T-cell (primary cell): ENCODE measurements at regions of chr3 and their contacts with region 1.

Region 1: DNA sequence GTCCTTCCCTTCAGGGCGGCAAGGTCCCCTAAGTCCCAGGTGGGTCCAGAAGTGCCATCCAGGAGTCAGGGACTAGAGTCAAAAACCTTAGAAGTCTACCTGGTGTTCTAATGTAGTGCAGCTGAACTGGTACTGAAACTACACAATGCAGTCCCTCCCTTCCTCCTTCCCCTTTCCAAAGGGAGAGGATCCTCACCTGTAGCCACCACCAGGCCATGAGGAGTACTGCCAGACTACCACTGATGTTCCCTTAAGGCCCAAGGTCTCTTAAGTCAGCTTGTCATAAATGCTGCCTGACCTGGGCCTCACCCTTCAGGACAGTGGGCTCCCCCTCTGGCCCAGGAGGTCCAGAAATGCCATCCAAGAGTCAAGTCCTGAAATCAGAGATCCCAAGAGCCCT is 98.9 kb downstream of the ULK4 start:
- DNase-seq: no peak
- ATAC-seq: no peak
- H3K4me3 ChIP-seq: no peak overlapping the region
- H3K4me3 Mint-ChIP-seq: no peak overlapping the region
- H3K27ac ChIP-seq: no peak overlapping the region
- H3K27ac Mint-ChIP-seq: no peak overlapping the region
- H3K4me1 ChIP-seq: no peaks in the 10 kb centered on the region
- H3K4me1 Mint-ChIP-seq: no peaks in the 10 kb centered on the region
- H3K27me3 ChIP-seq: no peaks in the 10 kb centered on the region
- H3K27me3 Mint-ChIP-seq: no peaks in the 10 kb centered on the region

Region 2: DNA sequence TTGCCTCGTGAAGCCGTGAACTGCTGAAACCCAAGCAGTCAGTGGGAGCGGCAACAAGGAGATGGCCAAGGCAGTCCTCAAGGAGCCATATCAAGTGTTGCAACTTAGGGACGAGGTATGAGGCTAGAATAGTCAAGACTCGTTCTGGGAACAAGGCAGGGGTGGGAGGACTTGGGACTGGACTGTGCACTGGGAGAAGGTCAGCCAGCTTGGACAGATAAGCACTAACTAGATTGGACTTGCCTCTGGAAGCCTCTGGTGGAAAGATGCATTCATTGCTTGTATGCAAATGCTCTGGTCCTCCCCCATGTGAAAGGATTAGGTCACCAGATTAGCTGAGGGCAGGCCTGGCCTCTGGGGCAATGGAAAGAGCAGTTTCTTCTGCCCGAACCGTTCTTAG is 787.0 kb before region 1 on chr3:
- CTCF ChIA-PET with region 1: interaction called in 1 of 2 experiments, 11 read pairs
- POLR2A ChIA-PET with region 1: no interaction called
- DNase-seq: no peak
- ATAC-seq: no peak
- H3K4me3 ChIP-seq: no peak overlapping the region
- H3K4me3 Mint-ChIP-seq: no peak overlapping the region
- H3K27ac ChIP-seq: no peak overlapping the region
- H3K27ac Mint-ChIP-seq: no peak overlapping the region
- H3K4me1 ChIP-seq: no peaks in the 10 kb centered on the region
- H3K4me1 Mint-ChIP-seq: no peaks in the 10 kb centered on the region
- H3K27me3 ChIP-seq: peaks cover 0 to 10% of the 10 kb centered on the region in 2 experiments
- H3K27me3 Mint-ChIP-seq: no peaks in the 10 kb centered on the region

Region 3: GRCh38 chr3:41874022-41874421 is 11.0 kb after region 1 on chr3:
- CTCF ChIA-PET with region 1: no interaction called
- POLR2A ChIA-PET with region 1: no interaction called
- DNase-seq: no peak
- ATAC-seq: no peak
- H3K4me3 ChIP-seq: no peak overlapping the region
- H3K4me3 Mint-ChIP-seq: no peak overlapping the region
- H3K27ac ChIP-seq: no peak overlapping the region
- H3K27ac Mint-ChIP-seq: no peak overlapping the region
- H3K4me1 ChIP-seq: no peaks in the 10 kb centered on the region
- H3K4me1 Mint-ChIP-seq: no peaks in the 10 kb centered on the region
- H3K27me3 ChIP-seq: no peaks in the 10 kb centered on the region
- H3K27me3 Mint-ChIP-seq: no peaks in the 10 kb centered on the region